ENCODE measurements at regions of chr2 and their contacts with region 1.

Region 1: DNA sequence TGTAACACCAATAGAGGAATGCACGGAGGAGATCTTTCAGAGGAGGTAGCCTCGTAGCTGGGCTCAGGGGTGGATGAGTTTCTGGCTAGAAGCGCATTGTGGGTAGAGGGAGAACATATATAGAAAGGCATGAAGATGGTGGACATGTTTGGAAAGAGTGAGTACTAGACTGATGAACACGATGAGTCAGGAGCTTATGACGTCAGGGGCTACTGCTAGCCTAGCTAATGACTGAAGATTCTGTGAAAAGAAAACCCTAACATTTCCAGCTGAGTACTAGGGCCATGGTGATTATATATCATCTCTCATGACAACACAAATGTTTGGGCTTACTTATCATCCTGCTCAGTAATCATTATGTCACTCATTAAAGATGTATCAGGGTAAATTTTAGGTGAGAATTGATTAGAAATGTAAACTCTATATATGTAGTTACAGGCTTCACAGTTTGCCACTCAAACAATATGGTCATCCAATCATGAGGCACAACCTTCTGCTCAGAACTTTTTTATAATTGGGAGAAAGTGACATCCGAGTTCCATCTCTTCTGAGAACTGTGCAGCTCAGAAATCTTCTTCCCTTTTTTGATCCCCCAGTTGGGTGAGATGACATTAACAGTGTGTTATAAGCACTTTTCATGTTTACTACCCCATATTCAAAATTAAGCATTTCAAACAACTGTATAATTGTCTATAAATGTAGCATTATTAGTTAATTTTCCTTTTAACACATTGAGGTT is 22.2 kb upstream of the IL1RN start:
- DNase-seq: no peak
- H3K4me3 Mint-ChIP-seq: no peak overlapping the region
- H3K27ac Mint-ChIP-seq: no peak overlapping the region
- H3K4me1 Mint-ChIP-seq: peaks cover 26% of the 10 kb centered on the region
- H3K27me3 Mint-ChIP-seq: peaks cover 8% of the 10 kb centered on the region

Region 2: GRCh38 chr2:113080134-113080533 is 25.1 kb before region 1 on chr2:
- CTCF ChIA-PET with region 1: interaction called, 11 read pairs
- POLR2A ChIA-PET with region 1: no interaction called
- DNase-seq: peak; percentile 59
- H3K4me3 Mint-ChIP-seq: no peak overlapping the region
- H3K27ac Mint-ChIP-seq: no peak overlapping the region
- H3K4me1 Mint-ChIP-seq: peaks cover 2% of the 10 kb centered on the region
- H3K27me3 Mint-ChIP-seq: peaks cover 16% of the 10 kb centered on the region

Region 3: DNA sequence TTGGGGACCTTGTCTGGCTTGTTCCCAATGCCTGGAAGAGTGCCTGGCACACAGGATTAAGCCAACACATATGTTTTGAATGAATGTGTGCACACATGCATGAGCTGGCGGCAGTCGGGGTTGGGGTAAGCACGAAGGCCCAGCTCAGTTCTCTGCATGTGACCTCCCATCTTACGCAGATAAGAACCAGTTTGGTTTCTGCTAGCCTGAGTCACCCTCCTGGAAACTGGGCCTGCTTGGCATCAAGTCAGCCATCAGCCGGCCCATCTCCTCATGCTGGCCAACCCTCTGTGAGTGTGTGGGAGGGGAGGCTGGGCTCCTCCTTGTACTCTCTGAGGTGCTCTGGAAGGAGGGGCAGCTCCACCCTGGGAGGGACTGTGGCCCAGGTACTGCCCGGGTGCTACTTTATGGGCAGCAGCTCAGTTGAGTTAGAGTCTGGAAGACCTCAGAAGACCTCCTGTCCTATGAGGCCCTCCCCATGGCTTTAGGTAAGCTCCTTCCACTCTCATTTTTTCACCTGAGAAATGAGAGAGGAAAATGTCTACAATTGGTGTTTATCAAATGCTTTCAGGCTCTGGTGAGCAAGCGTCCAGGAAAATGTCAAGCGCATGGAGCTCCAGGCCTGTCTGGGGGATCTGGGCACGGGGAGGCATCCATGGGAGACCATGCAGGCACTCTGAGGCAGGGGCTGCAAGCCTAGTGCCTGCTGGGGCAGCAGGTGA is 12.5 kb after region 1 on chr2:
- CTCF ChIA-PET with region 1: interaction called, 16 read pairs
- POLR2A ChIA-PET with region 1: no interaction called
- DNase-seq: no peak
- H3K4me3 Mint-ChIP-seq: no peak overlapping the region
- H3K27ac Mint-ChIP-seq: no peak overlapping the region
- H3K4me1 Mint-ChIP-seq: peaks cover 10% of the 10 kb centered on the region
- H3K27me3 Mint-ChIP-seq: peaks cover 18% of the 10 kb centered on the region

Region 4: GRCh38 chr2:113148606-113149560 is 43.7 kb after region 1 on chr2:
- CTCF ChIA-PET with region 1: no interaction called
- POLR2A ChIA-PET with region 1: no interaction called
- DNase-seq: no peak
- H3K4me3 Mint-ChIP-seq: no peak overlapping the region
- H3K27ac Mint-ChIP-seq: no peak overlapping the region
- H3K4me1 Mint-ChIP-seq: peaks cover 4% of the 10 kb centered on the region
- H3K27me3 Mint-ChIP-seq: peaks cover 18% of the 10 kb centered on the region